ENCODE measurements at regions of chr6 and their contacts with region 1.

Region 1: DNA sequence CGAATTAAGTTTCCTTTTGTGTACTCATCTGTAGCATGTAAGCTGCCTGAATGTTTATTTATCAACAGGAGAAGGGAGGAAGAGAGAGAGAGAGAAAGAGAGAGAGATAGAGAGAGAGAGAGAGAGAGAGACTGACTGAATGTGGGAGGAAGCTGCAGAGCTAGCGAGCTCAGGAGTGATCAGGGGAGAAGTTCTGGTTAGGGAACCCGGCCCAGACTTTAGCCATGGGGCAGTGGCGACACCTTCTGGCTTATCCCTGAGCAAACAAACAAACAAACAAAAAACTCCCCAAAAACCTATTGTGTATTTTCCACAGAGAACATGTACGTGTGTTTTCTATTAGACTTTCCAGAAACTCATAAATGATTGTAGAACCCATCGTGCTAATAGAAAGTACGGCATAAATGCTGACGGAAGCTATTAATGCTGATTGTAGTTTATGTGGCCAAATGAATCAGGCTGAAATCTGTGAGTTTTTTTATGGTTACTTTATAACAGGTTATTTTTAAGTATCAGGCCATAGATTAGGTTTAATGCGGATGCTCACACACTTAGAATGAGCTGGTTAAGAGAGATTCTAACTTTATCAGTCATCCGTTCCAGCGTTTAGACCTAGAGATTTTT is 92.8 kb downstream of the CLIC5 start:
- DNase-seq: peak; percentile 83
- H3K4me3 Mint-ChIP-seq: no peak overlapping the region
- H3K27ac Mint-ChIP-seq: peak overlapping the region; percentile 71
- H3K4me1 Mint-ChIP-seq: peaks cover 34% of the 10 kb centered on the region
- H3K27me3 Mint-ChIP-seq: peaks cover 12% of the 10 kb centered on the region

Region 2: GRCh38 chr6:44475779-44476434 is 1446.9 kb before region 1 on chr6:
- CTCF ChIA-PET with region 1: interaction called, 14 read pairs
- intact Hi-C with region 1: loop called (anchors 1 kb)
- DNase-seq: peak; percentile 81
- H3K4me3 Mint-ChIP-seq: no peak overlapping the region
- H3K27ac Mint-ChIP-seq: no peak overlapping the region
- H3K4me1 Mint-ChIP-seq: no peaks in the 10 kb centered on the region
- H3K27me3 Mint-ChIP-seq: no peaks in the 10 kb centered on the region

Region 3: DNA sequence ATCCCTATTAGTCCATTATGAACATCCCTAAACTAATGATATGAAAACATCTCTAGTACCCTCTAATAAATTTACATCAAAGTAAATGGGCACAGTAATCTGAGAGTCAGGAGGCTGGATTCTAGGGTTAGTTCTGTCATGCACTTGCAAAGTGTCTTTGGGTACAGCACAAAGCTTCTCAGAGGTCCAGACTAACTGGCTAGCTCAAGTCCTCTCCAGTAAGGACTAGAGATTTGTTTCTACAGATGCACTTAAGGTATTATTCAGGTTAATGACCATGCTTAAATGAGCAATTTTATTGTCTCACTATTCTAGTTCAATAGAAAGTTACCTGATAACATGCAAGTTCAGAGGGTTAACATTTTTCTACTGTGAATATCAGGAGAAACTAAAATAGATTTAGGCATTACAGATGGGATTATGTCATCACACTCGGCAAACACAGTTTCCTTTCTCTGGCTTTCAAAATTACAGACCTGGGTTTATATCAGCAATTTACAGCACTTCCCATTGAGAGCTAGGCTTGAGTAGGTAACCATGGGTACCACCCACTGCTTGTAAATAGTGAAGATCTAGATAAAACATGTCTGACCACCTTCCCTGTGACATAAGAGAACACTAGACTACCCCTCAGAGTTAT is 997.6 kb before region 1 on chr6:
- CTCF ChIA-PET with region 1: no interaction called
- intact Hi-C with region 1: loop called (anchors 5 kb)
- DNase-seq: peak; percentile 36
- H3K4me3 Mint-ChIP-seq: peak overlapping the region; percentile 0
- H3K27ac Mint-ChIP-seq: peak overlapping the region; percentile 16
- H3K4me1 Mint-ChIP-seq: peaks cover 53% of the 10 kb centered on the region
- H3K27me3 Mint-ChIP-seq: no peaks in the 10 kb centered on the region

Region 4: GRCh38 chr6:45377554-45378333 is 545.1 kb before region 1 on chr6 and contains the start of gene SUPT3H:
- CTCF ChIA-PET with region 1: interaction called, 3 read pairs
- intact Hi-C with region 1: loop called (anchors 1 kb)
- DNase-seq: peak; percentile 91
- H3K4me3 Mint-ChIP-seq: peak within 1 kb of the TSS; percentile 92
- H3K27ac Mint-ChIP-seq: peak within 1 kb of the TSS; percentile 99
- H3K4me1 Mint-ChIP-seq: peaks cover 16% of the 10 kb centered on the region
- H3K27me3 Mint-ChIP-seq: no peaks in the 10 kb centered on the region
- total RNA-seq, gene SUPT3H: 15.7 to 17.9 TPM

Region 5: GRCh38 chr6:45590225-45590624 is 332.6 kb before region 1 on chr6:
- CTCF ChIA-PET with region 1: no interaction called
- intact Hi-C with region 1: loop called (anchors 5 kb)
- DNase-seq: no peak
- H3K4me3 Mint-ChIP-seq: no peak overlapping the region
- H3K27ac Mint-ChIP-seq: no peak overlapping the region
- H3K4me1 Mint-ChIP-seq: peaks cover 77% of the 10 kb centered on the region
- H3K27me3 Mint-ChIP-seq: no peaks in the 10 kb centered on the region

Region 6: GRCh38 chr6:45801471-45802289 is 121.2 kb before region 1 on chr6:
- CTCF ChIA-PET with region 1: no interaction called
- intact Hi-C with region 1: loop called (anchors 5 kb)
- DNase-seq: peak; percentile 51
- H3K4me3 Mint-ChIP-seq: no peak overlapping the region
- H3K27ac Mint-ChIP-seq: no peak overlapping the region
- H3K4me1 Mint-ChIP-seq: peaks cover 15% of the 10 kb centered on the region
- H3K27me3 Mint-ChIP-seq: peaks cover 10% of the 10 kb centered on the region

Region 7: DNA sequence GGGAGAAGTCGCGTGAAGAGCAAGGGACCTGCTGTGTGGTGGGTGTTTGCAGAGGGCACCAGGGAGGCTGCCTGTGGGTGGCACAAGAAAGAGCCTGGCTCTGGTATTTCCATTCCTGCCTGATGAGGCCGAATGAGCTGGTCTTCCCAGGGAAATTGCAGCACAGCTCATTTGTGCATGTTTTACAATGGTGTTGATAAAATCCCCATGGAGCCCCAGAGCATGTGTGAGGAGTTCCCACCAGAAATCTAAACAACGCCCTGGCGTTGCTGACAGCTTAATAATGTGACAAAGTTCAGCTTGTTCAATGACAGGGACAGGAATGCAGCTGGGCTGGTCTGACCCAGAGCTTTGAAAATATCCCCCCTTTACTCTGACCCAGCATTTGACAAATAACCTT is 42.7 kb before region 1 on chr6:
- CTCF ChIA-PET with region 1: no interaction called
- intact Hi-C with region 1: no loop called
- DNase-seq: no peak
- H3K4me3 Mint-ChIP-seq: no peak overlapping the region
- H3K27ac Mint-ChIP-seq: no peak overlapping the region
- H3K4me1 Mint-ChIP-seq: no peaks in the 10 kb centered on the region
- H3K27me3 Mint-ChIP-seq: peaks cover 10% of the 10 kb centered on the region

Region 8: GRCh38 chr6:46053039-46053933 is 130.4 kb after region 1 on chr6:
- CTCF ChIA-PET with region 1: no interaction called
- intact Hi-C with region 1: no loop called
- DNase-seq: no peak
- H3K4me3 Mint-ChIP-seq: no peak overlapping the region
- H3K27ac Mint-ChIP-seq: peak overlapping the region; percentile 16
- H3K4me1 Mint-ChIP-seq: peaks cover 7% of the 10 kb centered on the region
- H3K27me3 Mint-ChIP-seq: peaks cover 18% of the 10 kb centered on the region

Region 9: GRCh38 chr6:46221222-46221793 is 298.5 kb after region 1 on chr6:
- CTCF ChIA-PET with region 1: no interaction called
- intact Hi-C with region 1: loop called (anchors 1 kb)
- DNase-seq: no peak
- H3K4me3 Mint-ChIP-seq: no peak overlapping the region
- H3K27ac Mint-ChIP-seq: peak overlapping the region; percentile 80
- H3K4me1 Mint-ChIP-seq: peaks cover 30% of the 10 kb centered on the region
- H3K27me3 Mint-ChIP-seq: peaks cover 11% of the 10 kb centered on the region

Measured in activated naive CD4-positive, alpha-beta T cell treated with anti-CD3 and anti-CD28 coated beads for 36 hours (primary cell).